Lower leg skin (tissue), 4 donors: ENCODE measurements at regions of chr5 and their contacts with region 1.

Region 1: DNA sequence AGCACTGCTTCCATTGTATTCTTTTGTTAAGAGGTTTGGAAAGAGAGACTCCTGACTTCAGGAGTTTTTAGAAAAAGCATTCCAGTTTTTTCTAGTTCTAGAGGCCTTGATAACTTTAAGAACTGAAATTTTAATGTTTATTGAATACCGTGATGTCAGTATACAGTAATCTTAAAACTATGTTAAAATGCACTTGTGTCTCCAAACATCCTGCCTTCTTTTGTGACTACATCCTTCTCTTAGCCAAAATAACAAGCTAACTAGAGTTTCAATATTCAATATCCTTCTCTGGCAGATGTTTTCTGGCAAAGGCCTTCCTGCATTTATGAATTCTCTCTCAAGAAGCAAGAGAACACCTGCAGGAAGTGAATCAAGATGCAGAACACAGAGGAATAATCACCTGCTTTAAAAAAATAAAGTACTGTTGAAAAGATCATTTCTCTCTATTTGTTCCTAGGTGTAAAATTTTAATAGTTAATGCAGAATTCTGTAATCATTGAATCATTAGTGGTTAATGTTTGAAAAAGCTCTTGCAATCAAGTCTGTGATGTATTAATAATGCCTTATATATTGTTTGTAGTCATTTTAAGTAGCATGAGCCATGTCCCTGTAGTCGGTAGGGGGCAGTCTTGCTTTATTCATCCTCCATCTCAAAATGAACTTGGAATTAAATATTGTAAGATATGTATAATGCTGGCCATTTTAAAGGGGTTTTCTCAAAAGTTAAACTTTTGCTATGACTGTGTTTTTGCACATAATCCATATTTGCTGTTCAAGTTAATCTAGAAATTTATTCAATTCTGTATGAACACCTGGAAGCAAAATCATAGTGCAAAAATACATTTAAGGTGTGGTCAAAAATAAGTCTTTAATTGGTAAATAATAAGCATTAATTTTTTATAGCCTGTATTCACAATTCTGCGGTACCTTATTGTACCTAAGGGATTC is 43.1 kb downstream of the NDFIP1 start:
- DNase-seq: peak in 1 of 2 donors; percentile 48
- H3K4me3 ChIP-seq: no peak overlapping the region
- CTCF ChIP-seq: peak in 1 of 3 donors; percentile 21
- POLR2A ChIP-seq: no peak

Region 2: GRCh38 chr5:142548739-142549275 is 397.1 kb after region 1 on chr5:
- intact Hi-C with region 1: loop called (anchors 5 kb)
- DNase-seq: peak in 1 of 2 donors; percentile 48
- H3K4me3 ChIP-seq: no peak overlapping the region
- CTCF ChIP-seq: no peak
- POLR2A ChIP-seq: no peak